ENCODE measurements at regions of chr7 and their contacts with region 1.

Region 1: DNA sequence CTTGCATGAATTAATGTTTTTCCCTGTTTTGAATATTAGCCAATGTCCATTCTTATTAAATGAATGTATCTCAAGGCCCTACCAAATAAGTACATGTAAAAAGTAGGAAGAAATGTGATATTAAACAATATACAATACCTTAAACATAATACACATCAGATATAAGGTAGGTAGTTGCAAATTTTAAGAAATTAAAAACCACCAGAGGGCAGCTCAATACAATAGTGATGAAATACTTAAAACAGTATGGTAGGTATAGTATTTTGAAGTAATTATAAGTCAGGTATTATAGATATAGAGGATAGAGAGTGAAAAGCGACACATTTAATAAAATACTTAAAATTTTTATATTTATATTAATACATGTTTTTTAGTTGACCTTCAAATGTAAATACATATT is 43.6 kb upstream of the CDK14 start:
- DNase-seq: no peak
- H3K4me3 ChIP-seq: no peak overlapping the region
- H3K4me3 Mint-ChIP-seq: no peak overlapping the region
- H3K27ac Mint-ChIP-seq: no peak overlapping the region
- H3K4me1 ChIP-seq: no peaks in the 10 kb centered on the region
- H3K4me1 Mint-ChIP-seq: no peaks in the 10 kb centered on the region
- H3K27me3 ChIP-seq: no peaks in the 10 kb centered on the region
- H3K27me3 Mint-ChIP-seq: peaks cover 20% of the 10 kb centered on the region
- CTCF ChIP-seq: peak; percentile 9 to 38

Region 2: DNA sequence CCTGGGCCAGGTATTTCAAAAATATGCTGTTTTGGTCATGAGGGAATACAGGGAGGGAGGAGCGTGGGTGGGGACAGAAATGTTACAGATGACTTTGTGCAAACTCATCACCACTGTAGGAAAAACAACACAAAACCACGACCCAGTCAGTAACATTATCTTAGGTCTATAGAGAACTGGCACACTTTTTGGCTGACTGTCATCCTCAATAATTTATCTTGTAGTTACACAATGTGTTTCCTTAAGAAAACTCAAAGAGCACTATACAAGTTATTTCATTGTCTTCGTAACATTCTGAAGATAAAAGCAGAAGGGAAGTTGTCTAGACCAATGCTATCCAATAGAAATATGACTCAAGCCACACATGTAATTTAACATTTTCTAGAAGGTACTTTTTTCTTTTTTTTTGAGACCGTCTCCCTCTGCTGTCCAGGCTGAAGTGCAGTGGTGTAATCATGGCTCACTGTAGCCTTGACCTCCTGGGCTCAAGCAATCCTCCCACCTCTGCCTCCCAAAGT is 26.7 kb after region 1 on chr7:
- CTCF ChIA-PET with region 1: no interaction called
- POLR2A ChIA-PET with region 1: no interaction called
- intact Hi-C with region 1: no loop called
- DNase-seq: peak in 1 of 2 experiments; percentile 34
- H3K4me3 ChIP-seq: no peak overlapping the region
- H3K4me3 Mint-ChIP-seq: no peak overlapping the region
- H3K27ac Mint-ChIP-seq: no peak overlapping the region
- H3K4me1 ChIP-seq: peaks cover 27% of the 10 kb centered on the region
- H3K4me1 Mint-ChIP-seq: peaks cover 7% of the 10 kb centered on the region
- H3K27me3 ChIP-seq: no peaks in the 10 kb centered on the region
- H3K27me3 Mint-ChIP-seq: no peaks in the 10 kb centered on the region
- CTCF ChIP-seq: no peak

Region 3: DNA sequence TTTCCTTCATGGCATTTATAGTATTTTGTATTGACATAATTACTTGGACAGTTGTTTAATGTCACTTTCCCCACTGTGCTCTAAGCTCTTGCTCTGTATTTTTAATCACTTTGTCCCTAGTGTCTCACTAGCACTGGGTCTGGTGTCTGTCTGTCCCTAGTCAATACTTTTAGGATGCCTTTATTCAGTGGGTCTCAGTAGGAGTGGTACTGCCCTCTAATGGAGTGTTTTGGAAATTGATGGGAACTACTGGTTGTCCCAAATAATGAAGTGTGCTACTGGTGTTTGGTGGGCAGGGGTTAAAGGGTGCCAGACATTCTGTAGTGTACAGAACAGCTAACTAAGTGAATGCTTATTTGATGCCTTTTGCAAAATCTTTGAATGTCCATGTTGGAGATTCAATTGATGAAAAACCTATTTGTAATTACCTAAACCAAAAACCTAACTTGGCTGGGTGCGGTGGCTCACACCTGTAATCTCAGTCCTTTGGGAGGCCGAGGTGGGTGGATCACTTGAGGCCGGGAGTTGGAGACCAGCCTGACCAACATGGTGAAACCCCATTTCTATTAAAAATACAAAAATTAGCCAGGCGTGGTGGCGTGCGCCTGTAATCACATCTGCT is 76.9 kb after region 1 on chr7:
- CTCF ChIA-PET with region 1: no interaction called
- POLR2A ChIA-PET with region 1: no interaction called
- intact Hi-C with region 1: loop called (anchors 1 kb)
- DNase-seq: peak in 1 of 2 experiments; percentile 65
- H3K4me3 ChIP-seq: no peak overlapping the region
- H3K4me3 Mint-ChIP-seq: no peak overlapping the region
- H3K27ac Mint-ChIP-seq: no peak overlapping the region
- H3K4me1 ChIP-seq: peaks cover 22% of the 10 kb centered on the region
- H3K4me1 Mint-ChIP-seq: peaks cover 17% of the 10 kb centered on the region
- H3K27me3 ChIP-seq: no peaks in the 10 kb centered on the region
- H3K27me3 Mint-ChIP-seq: no peaks in the 10 kb centered on the region
- CTCF ChIP-seq: peak; percentile 62 to 71

Measured in Caco-2 (cell line).